PC-9 (cell line): ENCODE measurements at regions of chr3 and their contacts with region 1.

Region 1: DNA sequence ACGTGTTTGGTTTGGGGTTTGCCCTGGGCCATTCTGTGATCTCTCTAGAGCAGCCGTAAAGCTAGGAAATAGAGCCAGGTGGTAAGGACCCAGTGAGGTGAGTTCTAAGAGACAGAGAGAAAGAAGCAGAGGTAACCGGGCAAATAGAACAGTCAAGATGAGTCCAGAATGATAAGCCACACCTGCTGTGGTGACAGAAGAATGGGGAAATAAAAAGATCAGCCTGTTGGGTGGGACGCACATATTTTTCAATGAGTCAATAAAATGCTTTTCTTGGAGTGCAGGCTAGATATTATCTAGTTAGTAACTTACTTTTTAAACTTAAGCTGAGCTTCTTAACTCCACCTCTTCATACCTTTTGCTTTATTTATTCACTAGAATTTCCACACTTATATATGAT is 135.0 kb downstream of the NFKBIZ start:
- DNase-seq: peak; percentile 67 to 91
- H3K4me3 ChIP-seq: no peak overlapping the region
- H3K27ac ChIP-seq: peak overlapping the region; percentile 1; the same call in 1 of the 2 replicates
- H3K4me1 ChIP-seq: peaks cover 12% of the 10 kb centered on the region
- H3K27me3 ChIP-seq: no peaks in the 10 kb centered on the region
- CTCF ChIP-seq: no peak

Region 2: GRCh38 chr3:101849051-101849720 is 135.2 kb before region 1 on chr3 and contains the start of gene NFKBIZ:
- CTCF ChIA-PET with region 1: no interaction called
- POLR2A ChIA-PET with region 1: interaction called, 3 read pairs
- intact Hi-C with region 1: loop called (anchors 1 kb)
- DNase-seq: peak; percentile 91 to 99
- H3K4me3 ChIP-seq: peak within 1 kb of the TSS; percentile 88
- H3K27ac ChIP-seq: peak within 1 kb of the TSS; percentile 80
- H3K4me1 ChIP-seq: peaks cover 24% of the 10 kb centered on the region
- H3K27me3 ChIP-seq: no peaks in the 10 kb centered on the region
- CTCF ChIP-seq: no peak
- total RNA-seq, gene NFKBIZ: 44.9 and 57.7 TPM in 2 replicates

Region 3: GRCh38 chr3:101913173-101913572 is 71.2 kb before region 1 on chr3:
- CTCF ChIA-PET with region 1: no interaction called
- POLR2A ChIA-PET with region 1: no interaction called
- intact Hi-C with region 1: no loop called
- DNase-seq: no peak
- H3K4me3 ChIP-seq: no peak overlapping the region
- H3K27ac ChIP-seq: no peak overlapping the region
- H3K4me1 ChIP-seq: no peaks in the 10 kb centered on the region
- H3K27me3 ChIP-seq: no peaks in the 10 kb centered on the region; the same call in 1 of the 2 replicates
- CTCF ChIP-seq: no peak

Region 4: GRCh38 chr3:101936419-101937356 is 47.7 kb before region 1 on chr3:
- CTCF ChIA-PET with region 1: no interaction called
- POLR2A ChIA-PET with region 1: interaction called, 12 read pairs
- intact Hi-C with region 1: loop called (anchors 1 kb)
- DNase-seq: peak in 1 of 2 experiments; percentile 77
- H3K4me3 ChIP-seq: no peak overlapping the region
- H3K27ac ChIP-seq: peak overlapping the region; percentile 75
- H3K4me1 ChIP-seq: peaks cover 16% of the 10 kb centered on the region
- H3K27me3 ChIP-seq: no peaks in the 10 kb centered on the region
- CTCF ChIP-seq: no peak

Region 5: DNA sequence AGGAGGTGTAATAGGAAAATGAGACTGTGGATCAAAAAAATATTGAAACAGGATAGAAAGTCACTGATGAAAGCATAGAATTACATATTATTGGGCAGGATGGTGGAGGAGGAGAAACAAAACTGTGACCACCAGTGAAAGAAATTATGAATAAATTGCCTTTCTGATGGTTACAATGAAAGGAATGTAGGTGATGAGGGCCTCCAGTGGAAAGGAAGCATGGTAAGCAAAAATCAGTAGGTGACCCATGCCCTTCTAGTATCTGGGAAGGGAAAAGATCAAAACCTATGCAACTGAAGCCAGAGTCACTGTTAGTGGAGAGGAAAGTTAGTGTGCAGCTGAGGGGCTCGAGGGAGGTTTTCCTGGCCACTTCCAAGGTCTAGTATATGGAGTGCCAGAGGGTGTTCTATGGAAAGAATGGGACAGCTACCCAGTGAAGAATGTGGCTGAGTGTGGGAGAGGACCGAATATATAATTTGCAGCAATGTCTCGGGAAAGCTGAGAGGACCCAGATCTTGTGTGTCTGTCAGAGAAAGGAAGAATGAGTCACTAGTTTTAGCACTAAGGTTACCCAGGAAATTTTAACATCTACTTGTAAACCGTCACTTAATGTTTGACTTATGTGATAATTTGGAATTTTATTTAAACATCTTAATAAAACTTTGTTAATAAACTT is 11.2 kb after region 1 on chr3:
- CTCF ChIA-PET with region 1: no interaction called
- POLR2A ChIA-PET with region 1: no interaction called
- intact Hi-C with region 1: no loop called
- DNase-seq: no peak
- H3K4me3 ChIP-seq: no peak overlapping the region
- H3K27ac ChIP-seq: no peak overlapping the region
- H3K4me1 ChIP-seq: no peaks in the 10 kb centered on the region
- H3K27me3 ChIP-seq: no peaks in the 10 kb centered on the region
- CTCF ChIP-seq: no peak

Region 6: DNA sequence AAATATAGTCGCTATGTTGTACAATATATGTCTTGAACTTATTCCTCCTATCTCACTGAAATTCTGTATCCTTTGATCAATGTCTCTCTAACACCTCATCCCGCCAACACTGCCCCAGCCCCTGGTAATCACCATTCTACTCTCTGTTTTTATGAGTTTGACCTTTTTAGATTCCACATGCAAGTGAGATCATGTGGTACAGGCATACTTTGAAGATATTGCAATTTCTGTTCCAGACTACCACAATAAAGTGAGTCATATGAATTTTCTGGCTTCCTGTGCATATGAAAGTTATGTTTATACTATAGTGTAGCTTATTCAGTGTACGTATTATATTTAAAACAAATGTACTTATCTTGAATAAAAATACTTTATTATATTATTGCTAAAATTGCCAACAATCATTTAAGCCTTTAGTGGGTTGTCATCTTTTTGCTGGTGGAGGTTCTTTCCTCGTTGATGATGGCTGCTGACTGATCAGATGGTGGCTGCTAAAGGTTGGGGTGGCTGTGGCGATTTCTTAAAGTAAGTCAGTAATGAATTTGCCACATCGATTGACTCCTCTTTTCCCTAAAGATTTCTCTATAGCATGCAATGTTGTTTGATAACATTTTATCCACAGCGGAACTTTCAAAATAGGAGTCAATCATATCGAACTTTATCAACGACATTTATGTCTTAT is 122.2 kb after region 1 on chr3:
- CTCF ChIA-PET with region 1: no interaction called
- POLR2A ChIA-PET with region 1: no interaction called
- intact Hi-C with region 1: no loop called
- DNase-seq: no peak
- H3K4me3 ChIP-seq: no peak overlapping the region
- H3K27ac ChIP-seq: no peak overlapping the region
- H3K4me1 ChIP-seq: peaks cover 5% of the 10 kb centered on the region
- H3K27me3 ChIP-seq: no peaks in the 10 kb centered on the region
- CTCF ChIP-seq: no peak

Region 7: DNA sequence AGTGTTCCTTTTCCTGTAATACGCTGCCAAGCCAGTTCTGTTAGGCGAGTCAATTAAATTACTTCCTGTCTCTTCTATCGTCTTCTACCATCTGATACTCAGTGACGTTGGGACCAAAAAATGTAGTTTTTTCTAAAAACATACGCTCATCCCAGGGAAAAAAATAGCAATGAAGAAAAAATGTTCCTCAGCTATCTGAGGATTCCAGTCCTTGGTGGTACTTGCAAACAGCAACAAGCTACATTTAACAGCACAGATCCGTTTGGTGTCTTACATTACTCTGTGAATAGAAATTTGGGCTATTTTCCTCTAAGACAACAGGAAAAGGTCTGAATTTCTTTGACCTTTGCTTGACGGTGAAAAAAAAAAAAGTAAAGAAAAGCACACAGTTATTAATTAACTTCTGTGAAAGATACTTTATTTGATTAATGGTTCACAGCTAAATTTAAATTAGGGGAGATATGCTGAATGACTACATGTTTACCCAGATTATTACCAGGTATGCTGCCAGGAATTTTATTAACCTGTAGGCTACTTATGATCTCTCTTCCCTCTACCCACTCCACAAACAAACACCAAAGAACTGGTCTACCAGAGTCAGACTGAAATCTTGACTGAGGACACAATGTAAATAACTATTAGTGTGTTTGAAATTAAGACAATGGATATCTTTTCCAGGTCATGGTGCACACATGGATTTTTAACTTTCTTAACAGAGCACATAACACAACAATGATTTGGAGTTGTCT is 196.1 kb after region 1 on chr3:
- CTCF ChIA-PET with region 1: no interaction called
- POLR2A ChIA-PET with region 1: no interaction called
- intact Hi-C with region 1: loop called (anchors 5 kb)
- DNase-seq: no peak
- H3K4me3 ChIP-seq: no peak overlapping the region
- H3K27ac ChIP-seq: no peak overlapping the region
- H3K4me1 ChIP-seq: peaks cover 18% of the 10 kb centered on the region
- H3K27me3 ChIP-seq: no peaks in the 10 kb centered on the region
- CTCF ChIP-seq: no peak